GM12878 (cell line): ENCODE measurements at regions of chr6 and their contacts with region 1.

Region 1: DNA sequence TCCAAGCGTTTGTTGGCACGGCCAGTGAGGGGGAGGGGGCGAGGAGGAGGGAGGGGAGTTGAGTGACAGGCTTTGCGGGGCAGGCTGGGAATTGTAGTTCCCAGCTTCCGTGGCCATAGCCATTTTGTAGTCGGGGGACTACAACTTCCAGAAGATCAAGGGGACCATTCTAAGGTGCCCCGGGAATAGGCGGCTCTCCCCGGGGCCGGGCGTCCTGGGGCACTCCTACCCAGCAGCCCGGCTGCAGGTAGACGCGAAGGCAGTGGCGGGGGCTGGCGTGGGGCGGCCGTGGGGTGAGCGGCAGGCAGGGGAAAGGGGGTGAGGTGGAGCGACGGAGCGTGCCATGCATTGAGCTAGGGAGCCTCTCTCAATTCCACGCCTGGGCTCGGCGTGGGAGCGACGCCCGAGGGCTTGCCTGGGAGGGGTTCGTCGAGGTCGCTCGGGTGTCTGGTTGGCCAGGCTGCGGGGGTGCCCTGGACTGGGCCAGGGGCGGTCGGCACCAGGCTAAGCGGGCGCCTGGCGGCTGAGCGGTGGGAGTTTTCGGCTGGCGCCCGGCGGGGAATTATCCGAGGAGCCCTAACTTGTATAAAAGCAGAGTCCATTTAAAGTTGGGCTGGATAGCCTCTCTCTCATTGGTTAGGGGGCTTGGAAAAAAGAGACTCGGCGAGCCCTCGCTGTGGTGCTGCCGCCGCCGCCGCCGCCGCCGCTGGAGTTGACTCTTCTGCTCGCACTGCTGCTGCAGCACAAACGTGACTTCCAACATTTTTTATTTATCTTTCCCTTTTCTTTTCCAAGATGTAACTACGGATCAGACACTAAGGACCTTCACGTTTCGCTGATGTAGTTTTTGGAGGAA is at the start of gene JARID2:
- DNase-seq: peak; percentile 91
- ATAC-seq: peak; percentile 72
- H3K4me3 ChIP-seq: peak within 1 kb of the TSS; percentile 97
- H3K27ac ChIP-seq: peak within 1 kb of the TSS; percentile 97
- H3K4me1 ChIP-seq: peaks cover under 1% of the 10 kb centered on the region; the same call in 1 of the 2 replicates
- H3K27me3 ChIP-seq: no peaks in the 10 kb centered on the region
- CTCF ChIP-seq: no peak
- EP300 ChIP-seq: 0 out of 4 replicates have a peak, but pooled peaks of 1 of the 2 experiments have one; percentile 14
- POLR2A ChIP-seq: peak; percentile 57; the same call in 1 of the 2 replicates
- RAD21 ChIP-seq: no peak
- polyA plus RNA-seq, gene JARID2: 4.2 to 5.2 TPM

Region 2: DNA sequence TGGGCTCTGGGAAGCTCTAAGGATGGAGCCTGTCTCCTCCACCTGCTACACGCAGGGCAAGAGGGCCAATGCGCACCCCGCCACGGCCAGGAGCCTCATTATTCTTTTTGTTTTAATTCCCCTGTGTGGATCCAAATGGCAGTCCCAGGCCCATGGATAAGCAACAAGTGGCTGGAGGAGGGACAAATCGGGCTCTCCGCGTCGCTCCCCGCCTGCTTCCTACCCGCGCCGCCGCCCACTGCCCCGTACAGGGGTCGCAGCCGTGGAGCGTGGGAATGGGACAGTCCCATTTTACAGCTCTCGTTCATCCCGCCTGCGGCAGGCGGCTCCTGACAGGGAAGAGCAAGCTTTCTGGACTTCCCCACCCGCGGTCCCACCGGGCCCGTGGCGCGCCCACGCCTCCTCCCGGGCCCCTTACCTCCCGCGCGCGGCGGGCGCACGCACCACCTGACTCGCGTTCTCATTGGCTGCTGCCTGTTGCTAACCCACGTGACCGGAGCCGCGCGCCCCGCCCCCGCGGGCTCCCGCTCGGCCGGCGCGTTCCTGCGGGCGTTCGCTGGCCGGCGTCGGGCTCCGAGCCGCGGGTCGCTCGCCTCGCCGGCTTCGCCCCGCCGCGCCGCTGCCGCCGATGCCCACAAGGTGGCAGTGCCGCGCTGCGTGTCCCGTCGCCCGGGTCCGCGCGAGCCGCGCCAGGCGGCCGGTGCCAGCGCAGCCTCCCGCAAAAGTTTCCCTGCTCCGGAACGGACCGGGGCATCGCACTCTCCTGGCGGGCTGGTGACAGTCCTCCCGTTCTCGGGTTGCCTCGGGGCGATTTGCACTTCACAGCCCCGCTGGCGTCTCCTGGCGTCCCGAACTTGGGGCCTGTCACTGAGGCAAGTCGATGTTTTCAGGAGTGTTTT is 1034.7 kb before region 1 on chr6:
- CTCF ChIA-PET with region 1: interaction called, 4 read pairs
- POLR2A ChIA-PET with region 1: no interaction called
- RAD21 ChIA-PET with region 1: interaction called, 3 read pairs
- SMC1A ChIA-PET with region 1: no interaction called
- in situ Hi-C with region 1: loop called (anchors 5 kb)
- intact Hi-C with region 1: loop called (anchors 1 kb)
- DNase-seq: peak; percentile 48
- ATAC-seq: peak; percentile 98
- H3K4me3 ChIP-seq: peak overlapping the region; percentile 91
- H3K27ac ChIP-seq: peak overlapping the region; percentile 81
- H3K4me1 ChIP-seq: peaks cover 16% of the 10 kb centered on the region
- H3K27me3 ChIP-seq: no peaks in the 10 kb centered on the region
- CTCF ChIP-seq: peak; percentile 49 to 80 (median 60); a peak in 5 of 6 replicates
- EP300 ChIP-seq: no peak
- POLR2A ChIP-seq: peak; percentile 78
- RAD21 ChIP-seq: peak; percentile 91

Region 3: GRCh38 chr6:14734416-14735340 is 510.9 kb before region 1 on chr6:
- CTCF ChIA-PET with region 1: no interaction called
- POLR2A ChIA-PET with region 1: no interaction called
- RAD21 ChIA-PET with region 1: interaction called, 3 read pairs
- SMC1A ChIA-PET with region 1: no interaction called
- in situ Hi-C with region 1: no loop called
- intact Hi-C with region 1: loop called (anchors 5 kb)
- DNase-seq: peak; percentile 88
- ATAC-seq: peak; percentile 92
- H3K4me3 ChIP-seq: no peak overlapping the region
- H3K27ac ChIP-seq: peak overlapping the region; percentile 76
- H3K4me1 ChIP-seq: peaks cover 41% of the 10 kb centered on the region
- H3K27me3 ChIP-seq: no peaks in the 10 kb centered on the region
- CTCF ChIP-seq: no peak
- EP300 ChIP-seq: peak; percentile 94
- POLR2A ChIP-seq: no peak
- RAD21 ChIP-seq: peak; percentile 4; the same call in 1 of the 2 replicates

Region 4: DNA sequence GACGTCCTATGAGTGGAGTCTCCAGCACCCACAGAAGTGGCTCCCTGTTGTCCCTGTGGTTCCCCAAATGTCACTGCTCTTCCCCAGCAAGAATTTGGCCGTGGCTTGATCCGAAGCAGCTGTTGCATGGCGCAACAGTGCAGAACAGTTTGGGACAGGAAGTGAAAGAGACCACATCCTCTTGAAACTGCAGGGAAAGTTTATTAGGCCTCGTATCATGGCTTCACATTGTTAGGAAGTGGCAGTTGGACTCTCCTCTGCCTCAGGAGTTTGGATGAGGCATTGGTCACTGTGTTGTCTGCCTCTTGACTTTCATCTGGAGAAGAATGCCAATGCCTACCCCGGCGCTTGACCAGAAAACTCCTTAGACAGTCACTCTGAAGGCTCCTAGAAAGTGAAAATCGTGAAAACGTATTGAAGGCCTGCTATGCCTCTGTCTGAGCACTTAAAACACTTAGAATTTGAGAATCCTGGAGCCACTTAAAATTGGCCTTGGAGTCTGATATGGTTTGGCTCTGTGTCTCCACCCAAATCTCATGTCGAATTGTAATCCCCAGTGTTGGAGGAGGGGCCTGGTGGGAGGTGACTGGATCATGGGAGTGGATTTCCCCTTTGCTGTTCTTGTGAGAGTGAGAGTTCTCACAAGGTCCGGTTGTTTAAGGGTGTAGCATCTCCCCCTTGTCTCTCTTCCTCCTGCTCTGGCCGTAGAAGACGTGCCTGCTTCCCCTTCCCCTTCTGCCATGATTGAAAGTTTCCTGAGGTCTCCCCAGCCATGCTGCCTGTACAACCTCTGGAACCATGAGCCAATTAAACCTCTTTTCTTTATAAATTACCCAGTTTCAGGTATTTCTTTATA is 334.7 kb before region 1 on chr6:
- CTCF ChIA-PET with region 1: no interaction called
- POLR2A ChIA-PET with region 1: no interaction called
- RAD21 ChIA-PET with region 1: no interaction called
- SMC1A ChIA-PET with region 1: no interaction called
- in situ Hi-C with region 1: no loop called
- intact Hi-C with region 1: loop called (anchors 10 kb)
- DNase-seq: peak; percentile 78
- ATAC-seq: peak; percentile 93
- H3K4me3 ChIP-seq: 0 out of 2 replicates have a peak overlapping the region, but pooled peaks have one; percentile 24
- H3K27ac ChIP-seq: peak overlapping the region; percentile 91
- H3K4me1 ChIP-seq: peaks cover 23% of the 10 kb centered on the region
- H3K27me3 ChIP-seq: no peaks in the 10 kb centered on the region
- CTCF ChIP-seq: no peak
- EP300 ChIP-seq: peak; percentile 28 to 94; a peak in 2 of 4 replicates
- POLR2A ChIP-seq: peak; percentile 43; the same call in 1 of the 2 replicates
- RAD21 ChIP-seq: peak; percentile 41; the same call in 1 of the 2 replicates

Region 5: GRCh38 chr6:15148356-15148946 is 97.1 kb before region 1 on chr6:
- CTCF ChIA-PET with region 1: interaction called, 3 read pairs
- POLR2A ChIA-PET with region 1: no interaction called
- RAD21 ChIA-PET with region 1: no interaction called
- SMC1A ChIA-PET with region 1: interaction called, 3 read pairs
- in situ Hi-C with region 1: no loop called
- intact Hi-C with region 1: loop called (anchors 5 kb)
- DNase-seq: no peak
- ATAC-seq: peak; percentile 75
- H3K4me3 ChIP-seq: no peak overlapping the region
- H3K27ac ChIP-seq: no peak overlapping the region
- H3K4me1 ChIP-seq: peaks cover 14% of the 10 kb centered on the region
- H3K27me3 ChIP-seq: no peaks in the 10 kb centered on the region
- CTCF ChIP-seq: no peak
- EP300 ChIP-seq: no peak; a peak in 1 of 4 replicates
- POLR2A ChIP-seq: no peak
- RAD21 ChIP-seq: no peak

Region 6: GRCh38 chr6:15171026-15171425 is 74.6 kb before region 1 on chr6:
- CTCF ChIA-PET with region 1: no interaction called
- POLR2A ChIA-PET with region 1: no interaction called
- RAD21 ChIA-PET with region 1: no interaction called
- SMC1A ChIA-PET with region 1: no interaction called
- in situ Hi-C with region 1: no loop called
- intact Hi-C with region 1: no loop called
- DNase-seq: peak; percentile 32
- ATAC-seq: peak; percentile 95
- H3K4me3 ChIP-seq: no peak overlapping the region
- H3K27ac ChIP-seq: no peak overlapping the region
- H3K4me1 ChIP-seq: peaks cover 9% of the 10 kb centered on the region
- H3K27me3 ChIP-seq: no peaks in the 10 kb centered on the region
- CTCF ChIP-seq: no peak
- EP300 ChIP-seq: peak; percentile 7 to 74; a peak in 1 of 4 replicates
- POLR2A ChIP-seq: no peak
- RAD21 ChIP-seq: no peak

Region 7: DNA sequence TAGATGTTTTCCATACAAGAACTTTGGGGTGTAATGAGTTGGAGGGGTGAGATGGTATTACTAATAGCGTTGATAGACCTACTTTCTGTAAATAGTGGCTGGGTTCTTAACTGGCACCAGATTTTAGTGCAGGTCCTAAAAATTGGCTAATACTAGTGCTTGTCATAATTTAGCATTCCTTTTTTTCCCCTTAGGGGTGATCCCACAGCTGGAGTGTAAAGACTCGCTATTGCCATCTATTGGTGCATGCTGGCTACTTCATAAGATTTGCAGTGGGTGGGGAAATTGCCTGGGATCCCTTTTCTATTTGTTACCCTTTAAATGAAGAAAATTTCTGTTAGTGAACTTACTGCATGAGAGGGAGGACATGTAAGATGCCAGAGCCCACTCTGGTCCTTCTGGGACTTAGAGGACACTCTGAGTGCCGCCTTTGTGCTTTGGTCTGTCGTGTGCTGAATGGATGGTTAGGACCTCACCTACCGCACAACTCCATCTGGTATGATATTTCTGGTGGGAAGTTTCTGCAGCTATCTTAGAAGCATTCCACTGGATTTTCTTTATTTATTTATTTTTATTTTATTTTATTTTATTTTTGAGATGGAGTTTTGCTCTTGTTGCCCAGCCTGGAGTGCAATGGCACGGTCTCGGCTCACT is 195.8 kb after region 1 on chr6:
- CTCF ChIA-PET with region 1: interaction called, 3 read pairs
- POLR2A ChIA-PET with region 1: no interaction called
- RAD21 ChIA-PET with region 1: interaction called, 6 read pairs
- SMC1A ChIA-PET with region 1: interaction called, 5 read pairs
- in situ Hi-C with region 1: no loop called
- intact Hi-C with region 1: loop called (anchors 5 kb)
- DNase-seq: no peak
- ATAC-seq: peak; percentile 74
- H3K4me3 ChIP-seq: no peak overlapping the region
- H3K27ac ChIP-seq: no peak overlapping the region
- H3K4me1 ChIP-seq: peaks cover 29% of the 10 kb centered on the region
- H3K27me3 ChIP-seq: no peaks in the 10 kb centered on the region
- CTCF ChIP-seq: peak; percentile 79 to 83 (median 79)
- EP300 ChIP-seq: no peak
- POLR2A ChIP-seq: no peak
- RAD21 ChIP-seq: peak; percentile 87

Region 8: GRCh38 chr6:15464211-15464725 is 218.7 kb after region 1 on chr6:
- CTCF ChIA-PET with region 1: interaction called, 10 read pairs
- POLR2A ChIA-PET with region 1: no interaction called
- RAD21 ChIA-PET with region 1: no interaction called
- SMC1A ChIA-PET with region 1: no interaction called
- in situ Hi-C with region 1: no loop called
- intact Hi-C with region 1: no loop called
- DNase-seq: no peak
- ATAC-seq: peak; percentile 95
- H3K4me3 ChIP-seq: no peak overlapping the region
- H3K27ac ChIP-seq: no peak overlapping the region
- H3K4me1 ChIP-seq: no peaks in the 10 kb centered on the region
- H3K27me3 ChIP-seq: no peaks in the 10 kb centered on the region
- CTCF ChIP-seq: peak; percentile 60 to 78 (median 72)
- EP300 ChIP-seq: no peak
- POLR2A ChIP-seq: no peak
- RAD21 ChIP-seq: peak; percentile 51